Ascending aorta (tissue), 2 donors: ENCODE measurements at regions of chr13 and their contacts with region 1.

Region 1: DNA sequence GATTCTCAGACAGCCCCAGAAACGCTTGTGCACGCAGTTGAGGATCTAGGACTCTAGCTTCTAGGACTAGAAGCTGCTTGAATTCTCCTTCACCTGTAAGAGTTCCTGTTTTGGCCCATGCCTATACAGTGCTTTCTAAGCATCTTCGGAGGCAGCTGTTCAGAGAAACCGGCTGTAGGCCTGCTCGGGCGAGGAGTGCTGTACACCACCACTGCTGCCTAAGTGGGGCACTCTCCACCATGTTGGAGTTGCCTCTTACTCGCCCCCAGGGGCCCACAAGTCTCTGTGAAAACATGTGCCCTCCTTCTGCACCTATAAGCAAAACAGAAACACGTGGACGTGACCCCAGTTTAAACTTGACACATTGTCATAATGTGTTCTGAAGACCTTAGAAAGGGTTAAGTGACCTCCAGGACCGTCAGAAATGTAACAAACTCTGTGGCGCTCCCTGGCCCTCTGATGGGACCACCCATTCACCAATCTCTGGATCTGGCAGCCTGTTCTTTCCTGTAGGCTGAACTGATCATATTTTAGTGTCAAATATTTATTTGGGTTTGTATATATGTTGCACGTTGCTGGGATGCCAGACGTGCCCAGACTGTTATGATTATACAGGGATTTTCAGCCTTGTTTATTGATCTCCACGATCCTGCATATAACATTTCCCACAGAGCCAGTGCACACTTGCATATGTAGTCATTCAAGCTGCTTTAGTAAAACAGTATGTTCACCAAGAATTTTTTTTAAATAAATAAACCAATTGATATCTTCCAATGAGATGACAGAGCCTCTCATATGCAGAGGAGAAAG is 60.8 kb downstream of the C13orf42 start:
- DNase-seq: no peak
- H3K4me3 ChIP-seq: no peak overlapping the region
- H3K27ac ChIP-seq: no peak overlapping the region
- H3K4me1 ChIP-seq: no peaks in the 10 kb centered on the region
- H3K27me3 ChIP-seq: no peaks in the 10 kb centered on the region
- CTCF ChIP-seq: no peak

Region 2: DNA sequence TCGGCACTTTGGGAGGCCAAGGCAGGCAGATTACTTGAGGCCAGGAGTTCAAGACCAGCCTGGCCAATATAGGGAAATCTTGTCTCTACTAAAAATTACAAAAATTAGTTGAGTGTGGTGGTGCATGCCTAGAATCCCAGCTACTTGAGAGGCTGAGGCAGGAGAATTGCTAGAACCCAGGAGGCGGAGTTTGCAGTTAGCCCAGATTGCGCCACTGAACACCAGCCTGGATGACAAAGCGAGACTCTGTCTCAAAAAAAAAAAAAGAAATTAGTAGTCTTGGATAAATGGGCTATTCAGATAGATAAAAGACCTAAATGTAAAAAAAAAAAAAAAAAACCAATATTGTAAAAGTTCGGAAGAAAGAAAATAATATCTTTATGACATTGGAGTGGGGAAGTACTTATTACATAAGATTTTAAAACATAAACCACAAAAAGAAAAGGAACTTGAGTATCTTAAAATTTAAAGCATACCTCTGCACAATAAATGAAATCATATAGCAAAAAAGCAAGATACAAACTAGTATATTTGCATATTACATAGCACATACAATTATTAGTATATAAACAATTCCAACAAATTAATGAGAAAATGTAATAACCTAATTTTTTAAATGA is 167.3 kb before region 1 on chr13:
- intact Hi-C with region 1: no loop called
- DNase-seq: no peak
- H3K4me3 ChIP-seq: no peak overlapping the region
- H3K27ac ChIP-seq: no peak overlapping the region
- H3K4me1 ChIP-seq: no peaks in the 10 kb centered on the region
- H3K27me3 ChIP-seq: no peaks in the 10 kb centered on the region
- CTCF ChIP-seq: no peak

Region 3: GRCh38 chr13:50991579-50992521 is 58.4 kb before region 1 on chr13:
- intact Hi-C with region 1: loop called (anchors 5 kb)
- DNase-seq: no peak
- H3K4me3 ChIP-seq: no peak overlapping the region
- H3K27ac ChIP-seq: peak overlapping the region in 1 of 2 donors; percentile 57
- H3K4me1 ChIP-seq: peaks cover 7 to 15% of the 10 kb centered on the region in 2 donors
- H3K27me3 ChIP-seq: no peaks in the 10 kb centered on the region
- CTCF ChIP-seq: no peak